AG04450 (cell line): ENCODE measurements at regions of chr2 and their contacts with region 1.

Region 1: GRCh38 chr2:38875227-38875575 is 533 bp downstream of the DHX57 start:
- DNase-seq: no peak
- H3K4me3 ChIP-seq: peak overlapping the region; percentile 99
- H3K27ac ChIP-seq: peak overlapping the region; percentile 24
- H3K27me3 ChIP-seq: no peaks in the 10 kb centered on the region
- CTCF ChIP-seq: no peak

Region 2: DNA sequence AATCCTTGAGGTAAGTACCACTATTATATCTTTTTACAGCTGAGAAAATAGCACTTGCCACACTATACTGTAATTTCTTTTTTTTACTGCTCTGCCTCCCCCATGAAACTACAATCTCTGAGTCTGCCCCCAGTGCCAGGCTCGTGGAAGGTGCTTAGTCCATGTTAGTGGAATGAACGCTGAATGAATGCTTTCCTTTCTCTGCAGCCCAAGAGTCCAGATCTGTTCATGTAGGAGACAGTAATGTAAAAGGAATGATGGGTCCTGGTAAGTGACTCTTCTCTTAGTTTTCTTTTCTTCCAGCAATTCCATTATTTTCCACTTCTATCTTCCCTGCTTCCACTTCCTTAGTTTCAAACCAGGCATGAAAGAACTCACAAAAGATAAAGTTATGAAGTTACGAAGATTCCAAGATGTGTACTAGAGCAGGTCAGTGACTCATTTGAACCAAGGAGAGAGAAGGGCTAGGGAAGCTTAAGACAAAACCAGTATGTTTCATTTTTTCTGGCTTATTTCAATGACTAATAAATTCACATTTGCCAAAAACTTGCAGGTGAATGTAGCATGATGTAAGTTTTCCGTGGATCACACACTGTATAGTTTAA is 60.5 kb after region 1 on chr2:
- CTCF ChIA-PET with region 1: interaction called, 11 read pairs
- POLR2A ChIA-PET with region 1: no interaction called
- DNase-seq: no peak
- H3K4me3 ChIP-seq: peak overlapping the region; percentile 11; the same call in 1 of the 2 replicates
- H3K27ac ChIP-seq: no peak overlapping the region
- H3K27me3 ChIP-seq: no peaks in the 10 kb centered on the region
- CTCF ChIP-seq: no peak